Activated T-helper 1 cell treated with anti-CD3 and anti-CD28 coated beads, Interleukin-12 subunit alpha, Interleukin-12 subunit beta, Interleukin-2, Interleukin-4 antibody, amounts not matched to agents 30 ng/mL and 10 ng/mL and 1 ng/mL, durations not matched to agents 14 hours and 24 hours and 36 hours (primary cell): ENCODE measurements at regions of chr13 and their contacts with region 1.

Region 1: GRCh38 chr13:73740666-73741065 is 393.5 kb downstream of the KLF12 start:
- DNase-seq: no peak
- H3K4me3 Mint-ChIP-seq: peak overlapping the region; percentile 32
- H3K27ac Mint-ChIP-seq: no peak overlapping the region
- H3K4me1 Mint-ChIP-seq: peaks cover 27% of the 10 kb centered on the region
- H3K27me3 Mint-ChIP-seq: peaks cover 5% of the 10 kb centered on the region

Region 2: DNA sequence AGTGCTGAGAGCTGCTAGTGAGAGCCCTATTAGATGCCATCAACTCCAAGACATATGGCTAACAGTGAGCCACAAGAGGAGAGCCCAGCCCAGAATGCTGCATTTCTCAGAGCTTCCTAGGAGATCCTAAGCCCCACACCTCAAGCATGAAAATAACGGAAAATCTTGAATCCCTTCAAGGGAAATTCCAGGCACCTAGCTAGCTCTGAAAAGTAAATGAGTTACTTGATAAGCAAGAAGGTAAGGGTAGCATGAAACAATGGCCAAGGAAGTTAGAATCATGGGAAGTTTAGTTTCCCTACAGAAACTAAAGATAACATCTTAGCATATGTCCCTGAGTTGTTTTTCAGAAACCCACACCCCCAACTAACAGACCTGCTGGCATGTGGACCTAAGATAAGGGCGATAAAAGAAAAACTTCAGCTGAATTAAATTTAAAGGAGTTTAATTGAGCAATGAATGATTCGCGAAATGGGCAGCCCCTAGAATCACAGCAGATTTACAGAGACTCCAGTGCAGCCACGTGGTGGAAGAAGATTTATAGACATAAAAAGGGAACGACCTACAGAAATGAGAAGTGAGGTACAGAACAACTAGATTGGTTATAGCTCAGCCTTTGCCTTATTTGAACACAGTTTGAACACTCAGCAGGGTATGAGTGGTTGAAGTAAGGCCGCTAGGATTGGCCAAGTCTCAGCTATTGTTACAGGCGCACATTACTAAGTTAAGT is 1572.4 kb before region 1 on chr13:
- intact Hi-C with region 1: no loop called
- DNase-seq: no peak
- H3K4me3 Mint-ChIP-seq: no peak overlapping the region
- H3K27ac Mint-ChIP-seq: no peak overlapping the region
- H3K4me1 Mint-ChIP-seq: no peaks in the 10 kb centered on the region
- H3K27me3 Mint-ChIP-seq: no peaks in the 10 kb centered on the region

Region 3: DNA sequence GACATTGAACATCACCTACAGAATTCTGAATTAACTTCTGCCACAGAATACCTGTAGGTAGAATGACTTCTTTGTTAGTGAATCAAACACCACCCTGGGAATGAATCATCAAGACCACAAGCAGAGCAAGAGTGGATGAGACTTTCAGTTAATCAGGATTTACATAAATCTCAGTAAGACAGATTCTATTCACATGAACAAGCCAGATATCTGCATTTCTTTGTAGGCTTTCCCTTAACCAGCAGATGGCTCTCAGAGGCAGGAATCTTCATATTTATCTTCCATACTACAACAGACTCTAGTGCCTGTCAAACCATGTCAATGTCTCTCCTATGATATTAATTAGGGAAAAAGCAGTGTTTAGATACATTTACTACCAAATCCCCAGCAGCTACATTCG is 18.5 kb before region 1 on chr13:
- intact Hi-C with region 1: loop called (anchors 2 kb)
- DNase-seq: no peak
- H3K4me3 Mint-ChIP-seq: no peak overlapping the region
- H3K27ac Mint-ChIP-seq: no peak overlapping the region
- H3K4me1 Mint-ChIP-seq: peaks cover 21% of the 10 kb centered on the region
- H3K27me3 Mint-ChIP-seq: peaks cover 10% of the 10 kb centered on the region